Activated naive CD4-positive, alpha-beta T cell treated with anti-CD3 and anti-CD28 coated beads, Interleukin-2, amount 10 ng/mL, durations not matched to agents 7 days and 5 days (primary cell): ENCODE measurements at regions of chr11 and their contacts with region 1.

Region 1: GRCh38 chr11:65013692-65014145 is 241 bp upstream of the ARL2 start:
- DNase-seq: peak; percentile 90
- H3K4me3 Mint-ChIP-seq: peak overlapping the region; percentile 85
- H3K27ac Mint-ChIP-seq: peak overlapping the region; percentile 98
- H3K4me1 Mint-ChIP-seq: peaks cover 32% of the 10 kb centered on the region
- H3K27me3 Mint-ChIP-seq: peaks cover 15% of the 10 kb centered on the region

Region 2: GRCh38 chr11:64846998-64847666 is 166.6 kb before region 1 on chr11:
- CTCF ChIA-PET with region 1: interaction called, 42 read pairs
- DNase-seq: peak; percentile 95
- H3K4me3 Mint-ChIP-seq: no peak overlapping the region
- H3K27ac Mint-ChIP-seq: peak overlapping the region; percentile 58
- H3K4me1 Mint-ChIP-seq: peaks cover 71% of the 10 kb centered on the region
- H3K27me3 Mint-ChIP-seq: peaks cover 4% of the 10 kb centered on the region

Region 3: GRCh38 chr11:64996710-64997380 is 16.9 kb before region 1 on chr11 and contains the start of gene BATF2:
- CTCF ChIA-PET with region 1: interaction called, 20 read pairs
- DNase-seq: peak; percentile 33
- H3K4me3 Mint-ChIP-seq: no peak within 1 kb of the TSS
- H3K27ac Mint-ChIP-seq: peak within 1 kb of the TSS; percentile 28
- H3K4me1 Mint-ChIP-seq: peaks cover 32% of the 10 kb centered on the region
- H3K27me3 Mint-ChIP-seq: peaks cover 38% of the 10 kb centered on the region

Region 4: GRCh38 chr11:65027213-65028067 is 13.7 kb after region 1 on chr11 and contains the start of gene SNX15:
- CTCF ChIA-PET with region 1: interaction called, 16 read pairs
- DNase-seq: peak; percentile 95
- H3K4me3 Mint-ChIP-seq: peak within 1 kb of the TSS; percentile 62
- H3K27ac Mint-ChIP-seq: peak within 1 kb of the TSS; percentile 93
- H3K4me1 Mint-ChIP-seq: peaks cover 22% of the 10 kb centered on the region
- H3K27me3 Mint-ChIP-seq: no peaks in the 10 kb centered on the region

Region 5: DNA sequence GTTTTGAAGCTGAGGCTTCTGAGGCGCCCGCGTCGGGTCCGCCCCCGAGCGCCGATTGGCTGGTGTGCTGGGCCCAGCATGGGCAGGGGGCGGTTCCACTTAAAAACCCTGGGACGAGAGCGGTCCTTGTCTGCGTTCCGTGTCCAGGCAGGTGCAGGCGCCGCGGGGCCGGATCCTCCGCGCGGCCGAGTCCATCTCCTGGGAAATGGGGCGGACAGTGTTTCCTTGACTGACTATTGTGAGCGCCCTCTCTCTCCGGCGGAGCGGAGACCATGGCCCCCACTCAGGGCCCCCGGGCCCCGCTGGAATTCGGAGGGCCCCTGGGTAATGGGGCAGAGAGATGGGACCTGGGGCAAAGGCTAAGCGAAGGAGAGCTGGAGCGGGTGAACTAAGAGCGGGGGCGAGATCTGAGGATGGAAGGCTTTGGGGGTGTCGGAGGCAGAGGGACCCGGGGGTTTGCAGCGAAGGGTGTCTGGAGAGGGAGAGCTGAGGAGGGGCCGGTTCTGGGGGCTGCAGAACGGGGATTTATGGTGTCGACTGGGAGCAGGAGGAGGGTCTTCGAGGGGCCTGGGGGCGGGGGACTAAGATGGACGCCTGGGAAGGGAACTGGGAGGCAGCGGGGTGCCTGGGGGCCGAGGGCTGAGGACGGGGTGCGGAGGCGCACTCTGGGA is 98.2 kb after region 1 on chr11 and contains the start of gene TM7SF2:
- CTCF ChIA-PET with region 1: interaction called, 15 read pairs
- DNase-seq: peak; percentile 98
- H3K4me3 Mint-ChIP-seq: peak within 1 kb of the TSS; percentile 87
- H3K27ac Mint-ChIP-seq: peak within 1 kb of the TSS; percentile 92
- H3K4me1 Mint-ChIP-seq: peaks cover 53% of the 10 kb centered on the region
- H3K27me3 Mint-ChIP-seq: peaks cover 4% of the 10 kb centered on the region

Region 6: DNA sequence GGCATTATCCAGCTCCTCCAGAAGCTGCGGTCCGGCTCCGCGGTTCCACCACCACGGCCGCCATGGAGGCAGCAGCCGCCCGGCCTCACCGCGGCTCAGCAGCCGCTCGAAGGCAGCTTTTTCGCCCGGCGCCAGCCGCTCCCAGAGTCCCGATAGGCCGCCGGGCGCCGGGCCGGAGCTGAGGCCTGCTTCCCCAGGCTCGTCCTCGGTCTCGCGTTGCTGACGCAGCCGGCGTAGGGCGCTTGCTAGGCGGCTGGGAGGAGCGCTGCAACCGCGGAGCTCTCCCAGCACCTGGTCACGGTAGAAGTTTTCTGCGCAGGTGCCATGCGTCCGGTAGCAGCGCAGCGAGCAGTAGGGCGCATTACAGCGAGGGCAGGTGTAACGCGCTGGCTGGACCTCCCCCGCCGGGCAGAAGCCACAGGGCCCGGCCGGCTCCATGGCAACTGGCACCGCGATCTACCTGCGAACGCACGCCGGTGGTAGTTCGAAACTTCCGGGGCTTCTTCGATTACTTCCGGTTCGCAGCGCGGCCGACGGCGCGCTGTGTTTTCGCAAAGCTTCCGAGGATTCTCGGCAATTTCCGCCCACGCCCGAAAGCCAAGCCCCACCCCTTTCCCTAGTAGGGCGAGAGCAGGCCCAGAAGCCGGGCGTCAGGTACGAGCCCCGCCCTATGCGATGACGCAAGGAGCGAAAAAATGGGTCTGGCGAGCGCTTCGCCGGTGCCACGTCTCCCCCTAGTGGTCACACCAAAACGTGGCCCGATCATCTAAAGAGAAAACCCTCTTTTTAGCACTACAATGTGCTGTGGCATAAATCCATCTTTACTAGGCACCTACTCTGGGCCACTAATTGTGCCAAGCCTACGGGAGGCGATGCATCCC is 103.7 kb after region 1 on chr11 and contains the start of gene ZNHIT2:
- CTCF ChIA-PET with region 1: interaction called, 10 read pairs
- DNase-seq: peak; percentile 100
- H3K4me3 Mint-ChIP-seq: peak within 1 kb of the TSS; percentile 90
- H3K27ac Mint-ChIP-seq: peak within 1 kb of the TSS; percentile 98
- H3K4me1 Mint-ChIP-seq: peaks cover 69% of the 10 kb centered on the region
- H3K27me3 Mint-ChIP-seq: no peaks in the 10 kb centered on the region